OCI-LY7 (cell line): ENCODE measurements at regions of chr1 and their contacts with region 1.

Region 1: DNA sequence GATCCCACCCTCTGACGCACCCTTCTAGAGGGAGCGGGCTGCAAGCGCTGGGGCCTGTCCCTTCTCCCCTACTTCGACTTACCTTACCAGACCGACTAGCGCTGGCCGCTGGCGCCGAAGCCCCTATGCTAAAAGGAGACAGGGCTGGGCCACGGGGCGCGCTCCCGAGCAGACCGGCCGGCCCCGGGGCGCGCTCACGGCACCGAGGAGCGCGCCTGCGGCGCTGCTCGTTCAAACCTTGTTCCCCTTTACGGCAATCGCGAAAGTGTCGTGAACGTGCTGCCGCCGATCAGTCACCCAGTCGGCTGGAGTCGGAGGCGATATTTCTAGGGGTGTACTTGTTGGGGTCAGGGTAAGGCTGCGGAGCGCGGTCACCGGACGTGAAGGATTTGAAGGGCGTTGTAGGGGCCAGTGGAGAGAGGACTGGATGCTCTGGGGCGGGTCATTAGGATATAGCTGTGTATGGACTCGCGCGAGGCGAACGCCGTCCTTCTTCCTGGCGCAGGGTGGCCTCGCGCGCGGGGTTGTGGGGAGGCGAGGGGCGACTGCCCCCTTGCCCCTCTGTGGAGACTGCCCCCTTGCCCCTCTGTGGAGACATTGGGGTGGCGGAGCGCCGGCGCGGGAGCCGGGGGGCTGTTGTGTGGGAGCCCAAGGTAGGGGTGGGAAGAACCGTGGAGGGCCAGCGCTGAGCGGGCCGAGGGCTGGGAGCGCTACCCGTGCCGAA is at the starts of genes CEPT1 and DRAM2:
- DNase-seq: peak; percentile 97
- H3K4me3 ChIP-seq: peak within 1 kb of the TSS; percentile 94
- H3K27ac ChIP-seq: peak within 1 kb of the TSS; percentile 91
- H3K4me1 ChIP-seq: peaks cover 55% of the 10 kb centered on the region
- CTCF ChIP-seq: no peak
- total RNA-seq, gene CEPT1: 41.5 and 44.9 TPM in 2 replicates
- total RNA-seq, gene DRAM2: 75.2 and 84.2 TPM in 2 replicates

Region 2: DNA sequence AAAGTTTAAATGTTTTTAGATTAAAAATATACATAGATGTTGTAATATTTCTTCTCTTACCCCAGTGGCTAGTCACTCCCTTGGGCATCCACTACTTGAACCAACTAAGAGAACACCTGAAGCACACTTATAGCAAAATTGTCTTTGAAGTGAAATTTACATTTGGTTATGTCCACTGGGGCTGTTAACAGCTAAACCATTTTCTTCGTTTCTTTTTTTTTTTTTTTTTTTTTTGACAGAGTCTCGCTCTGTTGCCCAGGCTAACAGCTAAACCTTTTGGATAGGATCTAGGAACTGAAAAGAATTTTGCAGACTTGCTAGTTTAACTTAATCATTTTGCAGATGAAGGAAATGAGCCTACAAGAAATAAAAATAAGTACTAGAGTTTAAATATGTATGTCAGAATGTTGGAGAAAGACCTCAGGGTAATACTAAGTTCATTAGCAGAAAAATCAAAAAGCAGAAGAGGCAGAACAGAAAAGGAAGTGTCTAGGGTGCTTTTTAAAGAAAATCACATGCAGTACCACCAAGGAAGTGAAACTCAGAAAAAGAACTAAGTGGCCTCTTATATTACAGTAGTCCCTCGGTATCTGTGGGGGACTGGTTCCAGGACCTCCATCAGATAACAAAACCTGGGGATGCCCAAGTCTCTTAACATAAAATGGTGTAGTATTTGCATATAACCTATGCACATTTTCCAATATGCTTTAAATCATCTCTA is 12.0 kb before region 1 on chr1:
- CTCF ChIA-PET with region 1: interaction called, 3 read pairs
- POLR2A ChIA-PET with region 1: interaction called, 22 read pairs
- intact Hi-C with region 1: loop called (anchors 1 kb)
- DNase-seq: peak; percentile 91
- H3K4me3 ChIP-seq: peak overlapping the region; percentile 65
- H3K27ac ChIP-seq: peak overlapping the region; percentile 98
- H3K4me1 ChIP-seq: peaks cover 95% of the 10 kb centered on the region
- CTCF ChIP-seq: no peak

Region 3: DNA sequence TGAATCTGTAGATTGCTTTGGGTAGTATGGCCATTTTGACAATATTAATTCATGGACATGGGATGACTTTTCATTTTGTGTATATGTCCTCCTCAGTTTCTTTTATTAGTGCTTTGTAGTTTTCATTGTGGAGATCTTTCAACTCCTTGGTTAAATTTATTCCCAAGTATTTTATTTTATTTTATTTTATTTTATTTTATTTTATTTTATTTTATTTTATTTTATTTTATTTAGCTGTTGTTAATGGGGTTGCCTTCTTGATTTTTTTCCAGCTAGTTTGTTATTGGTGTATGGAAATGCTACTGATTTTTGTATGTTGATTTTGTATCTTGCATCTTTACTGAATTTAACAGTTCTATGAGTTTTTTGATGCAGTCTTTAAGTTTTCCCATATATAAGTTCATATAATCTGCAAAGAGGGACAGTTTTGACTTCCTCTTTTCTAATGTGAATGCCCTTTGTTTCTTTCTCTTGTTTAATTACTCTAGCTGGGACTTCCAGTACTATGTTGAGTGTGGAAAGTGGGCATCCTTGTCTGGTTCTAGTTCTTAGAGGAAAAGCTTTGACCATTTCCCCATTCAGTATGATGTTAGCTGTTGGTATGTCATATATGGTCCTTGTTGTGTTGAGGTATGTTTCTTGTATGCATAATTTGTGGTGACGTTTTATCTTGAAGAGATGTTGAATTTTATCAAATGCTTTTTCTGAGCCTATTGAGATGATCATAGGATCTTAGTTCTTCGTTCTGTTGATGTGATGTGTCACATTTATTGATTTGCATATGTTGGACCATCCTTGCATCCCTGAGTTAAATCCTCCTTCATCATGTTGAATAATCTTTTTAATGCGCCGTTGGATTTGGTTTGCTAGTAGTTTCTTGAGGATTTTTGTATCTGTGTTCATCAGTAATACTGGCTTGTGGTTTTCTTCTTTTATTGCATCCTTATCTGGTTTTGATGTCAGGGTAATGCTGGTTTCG is 14.2 kb after region 1 on chr1:
- CTCF ChIA-PET with region 1: no interaction called
- POLR2A ChIA-PET with region 1: interaction called, 15 read pairs
- intact Hi-C with region 1: no loop called
- DNase-seq: no peak
- H3K4me3 ChIP-seq: no peak overlapping the region
- H3K27ac ChIP-seq: no peak overlapping the region
- H3K4me1 ChIP-seq: peaks cover 15% of the 10 kb centered on the region
- CTCF ChIP-seq: no peak

Region 4: DNA sequence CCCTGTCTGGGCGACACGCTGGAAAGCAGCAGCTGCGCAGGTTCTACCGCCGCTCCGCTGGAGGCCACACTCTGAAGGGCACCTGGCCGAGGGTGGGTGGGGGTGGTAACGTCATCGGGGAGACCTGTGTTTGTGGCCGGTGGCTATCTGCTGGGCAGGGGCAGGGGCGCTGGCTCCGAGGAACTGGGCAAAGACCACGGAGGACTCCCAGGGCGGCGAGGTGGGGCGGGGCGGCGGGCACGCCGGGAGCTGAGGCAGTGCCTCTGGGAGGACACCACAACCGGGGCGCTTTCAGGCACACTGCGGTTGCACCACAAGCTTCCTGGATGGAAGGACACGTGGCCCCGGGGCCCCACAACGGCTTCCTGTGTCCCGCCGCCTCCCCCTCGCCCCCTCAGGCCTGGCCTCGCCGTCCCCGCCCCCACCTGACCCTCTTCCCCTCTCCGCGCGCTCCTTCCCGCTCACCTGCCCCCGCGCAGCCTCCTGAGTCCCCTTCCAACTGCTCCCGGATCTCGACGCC is 63.6 kb after region 1 on chr1:
- CTCF ChIA-PET with region 1: no interaction called
- POLR2A ChIA-PET with region 1: interaction called, 6 read pairs
- intact Hi-C with region 1: loop called (anchors 5 kb)
- DNase-seq: peak; percentile 93
- H3K4me3 ChIP-seq: peak overlapping the region; percentile 70
- H3K27ac ChIP-seq: peak overlapping the region; percentile 67
- H3K4me1 ChIP-seq: peaks cover 72% of the 10 kb centered on the region
- CTCF ChIP-seq: no peak

Region 5: DNA sequence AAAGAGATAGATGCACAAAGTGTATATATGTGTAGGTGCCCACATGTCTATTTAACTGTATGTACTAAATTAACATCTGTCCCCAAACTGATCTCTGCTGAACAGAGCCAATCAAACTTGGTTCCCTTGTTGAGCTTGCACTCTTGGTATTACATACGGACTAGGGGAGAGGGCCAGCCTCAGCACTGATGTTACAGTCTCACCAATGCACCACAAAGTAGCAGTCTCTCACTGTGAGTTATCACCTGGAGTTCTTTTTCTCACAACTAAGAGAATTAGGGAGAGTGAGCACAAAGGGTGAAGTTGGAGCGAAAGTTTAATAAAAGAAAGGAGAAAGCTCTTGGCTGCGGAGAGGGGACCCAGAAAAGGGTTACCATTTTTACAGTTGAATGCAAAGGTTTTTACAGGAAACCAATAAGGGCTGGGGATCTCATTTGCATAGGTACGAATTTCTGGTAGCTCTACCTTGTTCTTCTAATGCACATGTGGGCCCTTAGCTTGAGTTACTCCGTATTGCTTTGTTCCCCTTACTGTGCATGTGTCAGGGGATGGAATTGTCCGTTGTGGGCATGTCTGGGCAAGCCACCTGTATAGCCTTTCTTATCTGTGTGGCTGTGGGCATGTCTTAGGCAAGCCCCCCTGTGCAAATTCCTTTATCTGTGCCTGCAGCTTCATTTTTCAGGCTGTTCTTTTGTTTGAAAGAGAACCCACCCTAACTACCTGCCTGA is 74.1 kb after region 1 on chr1:
- CTCF ChIA-PET with region 1: no interaction called
- POLR2A ChIA-PET with region 1: interaction called, 114 read pairs
- intact Hi-C with region 1: loop called (anchors 1 kb)
- DNase-seq: peak; percentile 83
- H3K4me3 ChIP-seq: peak overlapping the region; percentile 45
- H3K27ac ChIP-seq: peak overlapping the region; percentile 97
- H3K4me1 ChIP-seq: peaks cover 69% of the 10 kb centered on the region
- CTCF ChIP-seq: no peak

Region 6: DNA sequence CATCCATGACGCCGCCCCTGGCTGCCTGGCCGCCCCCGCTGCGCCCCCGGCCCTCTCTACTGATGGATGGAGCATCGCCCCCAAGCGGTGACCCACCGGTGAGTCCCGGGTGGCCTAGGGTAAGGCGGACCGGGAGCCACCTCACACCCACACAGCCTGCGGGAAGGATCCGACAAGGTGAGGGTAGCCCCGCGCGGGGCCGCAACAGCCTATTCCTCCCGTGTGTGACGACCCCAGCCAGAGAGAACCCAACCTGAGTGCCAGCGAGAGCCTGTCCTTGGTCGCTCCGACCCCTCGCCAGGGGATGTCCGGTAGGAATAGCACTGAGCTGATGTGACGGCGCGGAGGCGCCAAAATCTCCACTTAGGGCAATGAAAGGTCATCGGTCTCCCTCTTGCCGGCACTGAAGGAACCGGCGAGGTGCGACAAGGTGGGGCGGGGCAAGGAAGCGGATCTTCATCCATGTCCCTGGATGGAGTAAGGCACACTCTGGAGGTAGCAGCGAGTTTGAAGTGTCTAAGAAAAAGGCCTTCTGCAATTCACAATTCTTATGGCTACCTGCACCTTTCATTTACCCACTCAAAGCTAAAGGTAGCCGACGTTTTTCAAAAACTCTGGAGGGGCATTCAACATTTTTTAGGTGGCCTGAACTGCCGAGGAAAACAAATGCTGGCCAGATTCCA is 130.8 kb after region 1 on chr1:
- CTCF ChIA-PET with region 1: no interaction called
- POLR2A ChIA-PET with region 1: no interaction called
- intact Hi-C with region 1: no loop called
- DNase-seq: no peak
- H3K4me3 ChIP-seq: no peak overlapping the region
- H3K27ac ChIP-seq: no peak overlapping the region
- H3K4me1 ChIP-seq: no peaks in the 10 kb centered on the region
- CTCF ChIP-seq: no peak

Region 7: GRCh38 chr1:111406321-111406768 is 266.2 kb after region 1 on chr1:
- CTCF ChIA-PET with region 1: no interaction called
- POLR2A ChIA-PET with region 1: interaction called, 3 read pairs
- intact Hi-C with region 1: loop called (anchors 5 kb)
- DNase-seq: peak; percentile 97
- H3K4me3 ChIP-seq: peak overlapping the region; percentile 46
- H3K27ac ChIP-seq: peak overlapping the region; percentile 94
- H3K4me1 ChIP-seq: peaks cover 61% of the 10 kb centered on the region
- CTCF ChIP-seq: no peak